MCF 10A (cell line): ENCODE measurements at regions of chr15 and their contacts with region 1.

Region 1: GRCh38 chr15:97995881-97996603 is 35.5 kb downstream of the ARRDC4 start:
- DNase-seq: no peak
- H3K4me3 Mint-ChIP-seq: peak overlapping the region; percentile 52
- H3K27ac Mint-ChIP-seq: peak overlapping the region; percentile 87
- H3K4me1 Mint-ChIP-seq: peaks cover 16% of the 10 kb centered on the region
- H3K27me3 Mint-ChIP-seq: no peaks in the 10 kb centered on the region
- CTCF ChIP-seq: peak; percentile 33

Region 2: GRCh38 chr15:97968380-97968779 is 27.7 kb before region 1 on chr15:
- CTCF ChIA-PET with region 1: interaction called, 11 read pairs
- POLR2A ChIA-PET with region 1: interaction called, 6 read pairs
- intact Hi-C with region 1: no loop called
- DNase-seq: peak; percentile 27
- H3K4me3 Mint-ChIP-seq: no peak overlapping the region
- H3K27ac Mint-ChIP-seq: no peak overlapping the region
- H3K4me1 Mint-ChIP-seq: peaks cover 23% of the 10 kb centered on the region
- H3K27me3 Mint-ChIP-seq: no peaks in the 10 kb centered on the region
- CTCF ChIP-seq: no peak

Region 3: GRCh38 chr15:97978401-97979139 is 17.5 kb before region 1 on chr15:
- CTCF ChIA-PET with region 1: interaction called, 8 read pairs
- POLR2A ChIA-PET with region 1: interaction called, 40 read pairs
- intact Hi-C with region 1: no loop called
- DNase-seq: peak; percentile 64
- H3K4me3 Mint-ChIP-seq: no peak overlapping the region
- H3K27ac Mint-ChIP-seq: peak overlapping the region; percentile 51
- H3K4me1 Mint-ChIP-seq: peaks cover 39% of the 10 kb centered on the region
- H3K27me3 Mint-ChIP-seq: no peaks in the 10 kb centered on the region
- CTCF ChIP-seq: no peak

Region 4: GRCh38 chr15:98085003-98085639 is 89.1 kb after region 1 on chr15:
- CTCF ChIA-PET with region 1: interaction called, 40 read pairs
- POLR2A ChIA-PET with region 1: no interaction called
- intact Hi-C with region 1: loop called (anchors 1 kb)
- DNase-seq: peak; percentile 74
- H3K4me3 Mint-ChIP-seq: no peak overlapping the region
- H3K27ac Mint-ChIP-seq: no peak overlapping the region
- H3K4me1 Mint-ChIP-seq: no peaks in the 10 kb centered on the region
- H3K27me3 Mint-ChIP-seq: no peaks in the 10 kb centered on the region
- CTCF ChIP-seq: peak; percentile 53

Region 5: GRCh38 chr15:98401029-98401428 is 405.0 kb after region 1 on chr15:
- CTCF ChIA-PET with region 1: no interaction called
- POLR2A ChIA-PET with region 1: no interaction called
- intact Hi-C with region 1: no loop called
- DNase-seq: no peak
- H3K4me3 Mint-ChIP-seq: no peak overlapping the region
- H3K27ac Mint-ChIP-seq: no peak overlapping the region
- H3K4me1 Mint-ChIP-seq: no peaks in the 10 kb centered on the region
- H3K27me3 Mint-ChIP-seq: peaks cover 32% of the 10 kb centered on the region
- CTCF ChIP-seq: no peak